AG04449 (cell line): ENCODE measurements at regions of chrX and their contacts with region 1.

Region 1: GRCh38 chrX:10615931-10616775 is 4.2 kb downstream of the MID1 start:
- DNase-seq: no peak
- H3K4me3 ChIP-seq: no peak overlapping the region
- CTCF ChIP-seq: peak; percentile 46

Region 2: DNA sequence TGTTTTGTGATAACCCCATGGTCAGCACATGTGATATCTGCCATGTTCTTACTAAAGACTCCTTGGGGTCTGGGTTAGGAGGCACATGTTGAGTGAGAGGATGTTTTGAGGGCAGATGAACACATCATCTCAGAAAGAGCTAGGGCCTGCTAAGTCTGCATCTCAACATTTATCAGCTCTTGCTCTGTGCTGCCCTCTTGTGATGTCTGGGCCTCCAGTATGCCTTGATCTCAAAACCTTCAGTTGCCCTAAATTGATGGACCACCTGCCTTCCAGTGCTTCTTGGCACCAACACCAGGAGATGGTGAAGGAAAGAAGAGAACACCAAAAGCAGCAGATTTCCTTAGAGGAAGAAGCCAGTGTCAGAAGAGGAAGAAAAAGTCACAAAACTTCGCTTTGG is 18.3 kb before region 1 on chrX:
- CTCF ChIA-PET with region 1: interaction called, 12 read pairs
- POLR2A ChIA-PET with region 1: no interaction called
- DNase-seq: no peak
- H3K4me3 ChIP-seq: no peak overlapping the region
- CTCF ChIP-seq: peak; percentile 57